Posterior vena cava (tissue), 2 donors: ENCODE measurements at regions of chr12 and their contacts with region 1.

Region 1: DNA sequence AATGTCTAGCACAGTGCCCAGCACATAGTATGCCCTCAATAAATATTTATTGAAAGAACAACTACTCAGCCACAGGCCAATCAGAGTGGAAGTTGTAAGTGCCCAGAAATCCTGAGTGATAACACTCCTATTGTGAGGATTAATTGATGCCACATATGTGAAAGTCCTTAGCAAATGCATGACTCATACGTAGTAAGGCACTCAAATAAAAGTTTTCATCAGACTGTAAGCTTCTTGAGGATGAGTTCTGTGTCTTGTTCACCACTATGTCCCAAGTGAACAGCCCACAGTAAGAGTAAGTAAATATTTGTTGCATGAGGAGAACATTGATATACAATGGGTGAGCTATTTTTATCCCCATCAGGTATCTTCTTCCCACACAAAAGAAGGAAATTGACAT is 24.7 kb upstream of the ANO6 start:
- DNase-seq: no peak

Region 2: DNA sequence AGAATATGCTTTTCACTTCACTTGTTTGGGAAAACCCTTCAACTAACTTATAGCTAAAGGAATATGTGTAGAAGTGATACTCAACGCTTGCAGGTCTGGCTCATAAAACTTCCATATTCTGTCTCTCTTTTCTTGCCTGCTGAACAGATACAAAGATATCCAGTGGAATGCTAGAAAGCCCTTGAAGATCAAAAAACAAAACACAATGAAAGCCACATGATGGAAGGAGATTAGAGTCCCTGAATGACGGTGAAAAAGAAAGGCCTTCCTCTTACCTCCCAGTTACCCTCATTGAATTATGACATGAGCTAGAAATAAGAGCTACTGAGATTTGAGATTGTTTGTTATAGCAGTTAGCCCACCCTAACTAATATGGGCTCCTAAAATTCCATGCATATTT is 286.9 kb before region 1 on chr12:
- intact Hi-C with region 1: no loop called
- DNase-seq: no peak

Region 3: DNA sequence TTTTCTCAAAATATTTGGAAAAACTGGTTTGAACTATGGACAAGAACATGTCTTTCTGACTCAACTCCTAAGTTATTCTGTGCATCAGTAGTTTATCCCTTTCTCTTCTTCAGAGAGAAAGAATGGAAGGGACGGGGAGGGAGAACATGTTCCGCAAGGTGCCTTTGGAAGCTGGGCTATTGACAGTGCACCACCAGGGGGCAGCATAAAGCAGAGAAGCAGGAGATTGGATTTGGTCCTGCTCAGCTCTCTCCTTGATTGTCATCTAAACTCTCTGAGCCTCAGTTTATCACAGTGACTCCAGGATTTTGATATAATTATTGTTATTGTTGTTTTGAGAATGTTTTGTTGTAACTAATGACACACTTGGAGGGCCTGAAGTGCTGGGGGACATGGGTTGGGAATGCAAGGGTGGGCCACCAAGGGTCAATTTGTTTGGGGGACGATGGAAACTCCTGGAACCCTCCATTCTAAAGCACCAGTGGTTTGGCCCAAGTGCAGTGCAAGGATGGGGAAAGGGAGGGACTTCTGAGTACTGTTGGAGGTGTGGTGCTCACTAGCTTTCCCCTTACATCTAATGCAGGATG is 20.7 kb before region 1 on chr12:
- intact Hi-C with region 1: loop called in 1 of 2 experiments (anchors 1 kb)
- DNase-seq: peak; percentile 92

Region 4: GRCh38 chr12:45598761-45599160 is 407.5 kb after region 1 on chr12:
- intact Hi-C with region 1: no loop called
- DNase-seq: no peak